Naive thymus-derived CD4-positive, alpha-beta T cell (primary cell): ENCODE measurements at regions of chr9 and their contacts with region 1.

Region 1: DNA sequence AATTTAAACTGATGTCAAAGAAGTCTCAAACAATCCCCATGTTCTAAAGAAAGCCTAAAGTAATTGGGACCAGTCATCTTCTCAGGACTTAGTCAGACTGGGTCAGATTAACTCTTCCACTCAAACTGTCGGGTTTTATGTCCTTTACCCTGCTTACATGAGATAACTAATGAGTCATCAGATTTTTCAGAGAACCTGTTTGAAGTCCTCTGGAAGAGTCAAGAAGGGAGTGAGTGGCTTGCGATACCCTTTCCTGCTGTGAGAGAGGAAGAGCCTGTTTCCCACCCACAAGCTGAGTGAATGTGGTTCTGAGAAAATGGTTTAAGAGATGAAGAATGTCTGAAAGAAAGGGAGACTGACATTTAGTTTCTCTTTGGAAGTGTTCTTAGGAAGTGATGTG is 1866.7 kb upstream of the C9orf72 start:
- DNase-seq: no peak
- ATAC-seq: no peak
- H3K4me3 ChIP-seq: no peak overlapping the region
- H3K4me3 Mint-ChIP-seq: no peak overlapping the region
- H3K27ac ChIP-seq: no peak overlapping the region
- H3K27ac Mint-ChIP-seq: no peak overlapping the region
- H3K4me1 ChIP-seq: no peaks in the 10 kb centered on the region
- H3K4me1 Mint-ChIP-seq: no peaks in the 10 kb centered on the region
- H3K27me3 ChIP-seq: no peaks in the 10 kb centered on the region
- H3K27me3 Mint-ChIP-seq: no peaks in the 10 kb centered on the region

Region 2: GRCh38 chr9:29514336-29514735 is 74.4 kb after region 1 on chr9:
- CTCF ChIA-PET with region 1: no interaction called
- POLR2A ChIA-PET with region 1: no interaction called
- intact Hi-C with region 1: loop called in 1 of 2 experiments (anchors 10 kb)
- DNase-seq: no peak
- ATAC-seq: no peak
- H3K4me3 ChIP-seq: no peak overlapping the region
- H3K4me3 Mint-ChIP-seq: no peak overlapping the region
- H3K27ac ChIP-seq: no peak overlapping the region
- H3K27ac Mint-ChIP-seq: no peak overlapping the region
- H3K4me1 ChIP-seq: no peaks in the 10 kb centered on the region
- H3K4me1 Mint-ChIP-seq: no peaks in the 10 kb centered on the region
- H3K27me3 ChIP-seq: no peaks in the 10 kb centered on the region
- H3K27me3 Mint-ChIP-seq: no peaks in the 10 kb centered on the region